ENCODE measurements at regions of chr2 and their contacts with region 1.

Region 1: GRCh38 chr2:80499095-80499494 is 194.5 kb upstream of the LRRTM1 start:
- DNase-seq: no peak

Region 2: DNA sequence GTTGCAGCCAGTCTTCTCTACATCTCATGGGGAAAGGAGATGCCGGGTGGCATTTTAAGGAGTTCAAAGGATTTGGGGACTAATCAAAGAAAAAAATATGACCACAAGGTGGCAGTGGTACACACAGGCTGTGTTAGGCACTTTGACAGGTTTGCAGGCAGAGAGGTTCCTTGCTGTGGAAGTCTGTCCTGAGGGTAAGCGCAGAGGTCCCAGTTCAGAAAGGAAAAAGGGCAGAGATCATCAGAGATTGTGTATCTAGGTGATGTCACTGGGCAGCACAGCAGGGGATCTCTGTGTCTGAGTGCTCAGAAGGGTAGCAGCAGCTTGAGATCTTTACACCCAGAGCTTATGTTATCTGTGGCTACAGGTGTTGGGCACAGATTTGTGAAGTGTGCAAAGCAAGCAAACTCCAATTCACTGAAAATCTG is 425.9 kb before region 1 on chr2:
- intact Hi-C with region 1: loop called (anchors 2 kb)
- DNase-seq: no peak

Region 3: GRCh38 chr2:80281049-80281448 is 218.0 kb before region 1 on chr2:
- intact Hi-C with region 1: no loop called
- DNase-seq: no peak

Region 4: DNA sequence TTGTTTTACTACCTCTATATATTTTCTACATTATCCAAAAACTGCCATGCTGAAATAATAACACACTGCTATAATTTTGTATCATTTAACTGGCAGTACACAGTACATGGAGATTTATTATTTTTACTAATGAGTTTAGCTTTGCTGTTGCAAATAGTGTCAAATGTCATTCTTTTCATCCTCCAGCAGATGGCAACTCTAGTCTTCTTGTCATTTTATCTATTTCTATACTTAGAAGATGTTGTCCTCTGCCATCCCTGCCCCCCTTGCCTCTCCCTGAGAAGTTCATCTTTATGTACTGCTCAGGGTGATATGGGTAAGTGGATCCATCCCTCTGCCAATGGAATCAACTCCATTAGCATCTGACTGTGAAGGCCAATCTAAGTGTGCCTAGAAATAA is 172.9 kb before region 1 on chr2:
- intact Hi-C with region 1: loop called (anchors 2 kb)
- DNase-seq: no peak

Region 5: GRCh38 chr2:80437959-80438358 is 61.1 kb before region 1 on chr2:
- intact Hi-C with region 1: no loop called
- DNase-seq: no peak

Region 6: GRCh38 chr2:80510716-80511115 is 11.6 kb after region 1 on chr2:
- intact Hi-C with region 1: loop called (anchors 1 kb)
- DNase-seq: no peak

Measured in cardiac septum (tissue), 1 donor.